Gastrocnemius medialis (tissue), 4 donors: ENCODE measurements at regions of chr12 and their contacts with region 1.

Region 1: DNA sequence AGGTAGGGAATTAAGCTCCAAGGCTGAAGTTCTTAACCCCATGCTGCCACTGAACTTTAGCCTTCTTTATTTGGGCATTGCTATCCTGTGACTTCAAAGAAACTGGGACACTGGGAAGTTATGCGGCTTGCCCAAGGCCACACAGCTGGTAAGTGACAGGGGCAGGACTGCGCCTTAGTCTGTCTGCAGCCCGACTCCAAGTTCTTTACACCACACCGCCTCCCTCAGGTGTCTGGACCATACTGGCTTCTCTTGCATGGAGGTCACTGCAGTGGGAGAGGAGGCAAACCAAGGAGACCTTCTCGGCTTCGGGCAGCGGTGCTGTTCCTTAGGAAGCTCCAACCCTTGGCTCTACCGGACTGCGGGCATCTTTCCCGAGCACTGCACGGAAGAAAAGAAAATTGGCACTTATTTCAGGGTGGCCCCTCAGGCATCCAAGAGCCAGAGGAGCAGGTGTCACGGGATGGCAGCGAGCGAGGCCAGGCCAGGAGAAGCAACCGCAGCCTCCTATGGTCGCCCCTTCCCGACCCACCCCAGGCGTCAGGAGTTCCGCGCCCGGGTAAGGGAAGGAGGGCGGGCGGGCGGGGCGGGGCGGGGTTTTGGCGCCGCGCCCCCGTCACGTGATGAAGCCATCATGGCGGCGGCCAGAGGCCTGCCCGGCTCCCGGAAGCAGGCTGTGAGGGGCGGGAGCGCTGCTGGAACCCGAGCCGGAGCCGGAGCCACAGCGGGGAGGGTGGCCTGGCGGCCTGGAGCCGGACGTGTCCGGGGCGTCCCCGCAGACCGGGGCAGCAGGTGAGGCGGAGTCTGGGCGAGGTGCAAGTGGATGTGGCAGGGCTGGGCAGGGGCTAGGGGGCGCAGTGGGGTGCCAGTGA is 16.4 kb upstream of the ESPL1 start:
- DNase-seq: peak; percentile 73 to 81
- ATAC-seq: peak; percentile 91 to 96
- H3K4me3 ChIP-seq: peak overlapping the region; percentile 67 to 85 (median 71)
- H3K27ac ChIP-seq: peak overlapping the region; percentile 92 to 97 (median 94)
- H3K4me1 ChIP-seq: peaks cover 16 to 17% of the 10 kb centered on the region in 2 donors
- H3K27me3 ChIP-seq: no peaks in the 10 kb centered on the region
- CTCF ChIP-seq: peak; percentile 20 to 46 (median 33)
- POLR2A ChIP-seq: peak; percentile 36 to 47

Region 2: DNA sequence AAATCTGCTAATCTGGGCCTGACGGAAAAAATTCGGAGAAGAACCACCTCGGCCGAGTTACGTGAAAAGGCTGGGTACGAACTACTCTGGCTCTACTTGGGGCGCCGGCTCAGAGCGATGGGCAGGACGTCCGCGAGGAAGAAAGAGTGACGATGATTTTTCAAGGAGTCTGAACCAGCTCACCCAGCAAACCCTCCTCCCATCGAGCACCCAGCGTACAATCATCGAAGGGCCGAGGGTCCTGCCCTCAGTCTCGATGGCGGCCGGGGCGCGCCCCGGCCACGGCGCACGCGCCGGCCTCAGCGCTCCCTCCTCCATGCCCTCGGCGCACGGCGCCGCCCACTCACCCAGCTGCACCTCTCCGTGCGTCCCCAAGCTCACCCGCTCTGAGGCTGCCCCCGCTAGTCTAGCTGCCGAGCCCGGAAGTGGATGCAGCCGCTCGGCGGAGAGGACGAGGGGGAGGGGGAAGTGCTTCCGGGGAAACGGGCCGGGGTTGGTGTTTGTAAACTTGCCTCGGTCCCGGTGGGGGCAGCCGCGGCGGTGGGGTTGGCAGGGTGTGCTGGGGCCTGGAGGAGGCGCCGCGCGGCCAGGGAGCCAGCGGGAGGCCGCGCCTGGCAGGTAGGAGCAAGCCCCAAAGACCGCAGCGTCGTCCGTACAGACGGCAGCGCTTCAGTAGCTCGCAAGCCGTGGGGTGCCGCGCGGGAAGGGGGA is 71.3 kb before region 1 on chr12 and contains the starts of genes CSAD and ZNF740:
- in situ Hi-C with region 1: no loop called
- intact Hi-C with region 1: loop called (anchors 2 kb)
- DNase-seq: peak; percentile 98
- ATAC-seq: peak; percentile 92 to 95
- H3K4me3 ChIP-seq: peak within 1 kb of the TSS; percentile 63 to 95 (median 69)
- H3K27ac ChIP-seq: peak within 1 kb of the TSS; percentile 85 to 97 (median 91)
- H3K4me1 ChIP-seq: peaks cover 37% of the 10 kb centered on the region in 2 donors
- H3K27me3 ChIP-seq: no peaks in the 10 kb centered on the region
- CTCF ChIP-seq: no peak
- POLR2A ChIP-seq: peak; percentile 71 to 79
- total RNA-seq, gene CSAD: 0.68 to 14.9 (median 1.9) TPM
- total RNA-seq, gene ZNF740: 4.1 to 7.4 (median 5.0) TPM

Region 3: GRCh38 chr12:53220801-53221202 is 30.9 kb before region 1 on chr12:
- in situ Hi-C with region 1: no loop called
- intact Hi-C with region 1: loop called (anchors 1 kb)
- DNase-seq: peak; percentile 80 to 81
- ATAC-seq: peak; percentile 81 to 83
- H3K4me3 ChIP-seq: peak overlapping the region; percentile 74 to 83 (median 75)
- H3K27ac ChIP-seq: peak overlapping the region; percentile 98 to 100 (median 98)
- H3K4me1 ChIP-seq: peaks cover 37 to 60% of the 10 kb centered on the region in 2 donors
- H3K27me3 ChIP-seq: no peaks in the 10 kb centered on the region
- CTCF ChIP-seq: no peak
- POLR2A ChIP-seq: no peak

Region 4: DNA sequence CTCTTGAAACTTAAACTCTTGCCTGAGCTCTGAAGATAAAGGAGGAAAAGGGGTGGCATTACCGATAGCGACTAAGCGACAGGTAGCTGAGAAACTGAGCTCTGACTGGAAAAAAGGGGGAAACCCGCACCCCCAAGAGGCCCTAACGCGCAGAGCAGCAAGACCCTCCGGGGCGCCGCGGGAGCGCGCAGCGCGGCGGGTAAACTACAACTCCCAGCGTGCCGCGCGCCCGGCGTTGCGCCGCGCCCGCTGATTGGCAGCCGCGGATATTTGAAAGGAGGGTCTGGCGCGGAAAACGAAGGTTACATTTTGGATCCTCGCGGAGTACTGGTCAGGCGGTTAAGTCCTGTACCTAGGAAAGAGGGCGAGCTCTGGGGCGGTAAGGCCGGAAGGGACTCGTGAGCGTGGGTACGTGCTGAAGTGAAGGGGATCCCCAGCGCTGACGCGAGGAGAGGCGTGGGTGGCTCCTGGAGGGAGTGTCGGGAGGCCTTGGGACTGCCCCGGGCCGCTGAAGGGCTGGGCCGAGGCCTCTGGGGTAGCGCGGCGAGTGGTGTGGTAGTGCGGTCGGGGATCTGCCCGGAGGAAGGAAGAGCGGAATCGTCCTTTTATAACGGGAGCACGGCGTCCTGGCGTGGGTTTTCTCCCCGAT is 16.4 kb after region 1 on chr12 and contains the start of gene ESPL1:
- in situ Hi-C with region 1: no loop called
- intact Hi-C with region 1: loop called (anchors 1 kb)
- DNase-seq: peak; percentile 16 to 47
- ATAC-seq: peak; percentile 84 to 88
- H3K4me3 ChIP-seq: peak within 1 kb of the TSS; percentile 64 to 77 (median 72)
- H3K27ac ChIP-seq: peak within 1 kb of the TSS in 3 of 4 donors; percentile 61 to 68 (median 64)
- H3K4me1 ChIP-seq: peaks cover 6 to 7% of the 10 kb centered on the region in 2 donors
- H3K27me3 ChIP-seq: no peaks in the 10 kb centered on the region
- CTCF ChIP-seq: peak in 3 of 5 experiments; percentile 21 to 41 (median 36)
- POLR2A ChIP-seq: no peak
- total RNA-seq, gene ESPL1: 0.20 to 0.44 (median 0.24) TPM in 3 of 4 donors, not detected in the other

Region 5: DNA sequence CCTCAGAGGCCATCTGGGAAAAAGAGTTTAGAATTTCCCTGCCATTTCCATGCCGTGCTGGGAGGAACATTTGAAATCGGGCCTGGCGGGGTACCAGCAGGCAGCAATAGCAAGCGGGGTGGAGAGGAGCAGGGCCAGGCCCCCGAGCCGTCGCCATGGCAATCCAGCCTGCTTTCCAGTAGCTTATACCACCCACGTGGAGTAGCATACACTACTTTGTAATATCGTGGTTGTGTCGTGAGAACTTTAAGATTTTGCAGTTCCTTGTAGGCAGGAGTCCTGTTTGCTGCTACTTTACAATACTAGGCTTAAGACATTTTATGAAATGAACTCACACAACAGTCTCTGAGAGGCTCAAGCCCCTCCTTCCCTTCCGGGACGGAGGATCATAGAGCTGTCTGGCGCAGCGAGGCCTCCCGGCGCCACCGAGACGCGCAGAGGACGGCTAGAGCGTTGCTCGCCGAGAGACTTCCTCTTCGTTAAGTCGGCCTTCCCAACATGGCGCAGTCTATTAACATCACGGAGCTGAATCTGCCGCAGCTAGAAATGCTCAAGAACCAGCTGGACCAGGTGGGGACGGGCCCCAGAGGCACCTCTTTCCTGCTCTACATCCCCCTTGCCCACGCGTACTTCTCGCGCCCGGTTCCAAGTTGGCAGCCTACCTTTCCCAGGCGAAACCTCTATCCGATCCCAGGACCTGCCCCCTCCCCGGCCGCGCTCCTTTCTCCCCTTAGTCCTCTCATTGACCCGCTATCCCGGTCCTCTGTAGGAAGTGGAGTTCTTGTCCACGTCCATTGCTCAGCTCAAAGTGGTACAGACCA is 43.6 kb after region 1 on chr12 and contains the start of gene PFDN5:
- in situ Hi-C with region 1: no loop called
- intact Hi-C with region 1: loop called (anchors 5 kb)
- DNase-seq: peak; percentile 83 to 87
- ATAC-seq: peak; percentile 90 to 93
- H3K4me3 ChIP-seq: peak within 1 kb of the TSS; percentile 77 to 97 (median 89)
- H3K27ac ChIP-seq: peak within 1 kb of the TSS; percentile 83 to 90 (median 88)
- H3K4me1 ChIP-seq: peaks cover 28% of the 10 kb centered on the region in 2 donors
- H3K27me3 ChIP-seq: no peaks in the 10 kb centered on the region
- CTCF ChIP-seq: peak in 2 of 5 experiments; percentile 32 to 44
- POLR2A ChIP-seq: peak; percentile 56 to 62
- total RNA-seq, gene PFDN5: 341 to 464 (median 358) TPM